ENCODE measurements at regions of chr5 and their contacts with region 1.

Region 1: GRCh38 chr5:132064738-132065331 is 4.4 kb downstream of the IL3 start:
- DNase-seq: peak; percentile 70
- ATAC-seq: peak; percentile 93
- H3K4me3 ChIP-seq: no peak overlapping the region
- H3K27ac ChIP-seq: no peak overlapping the region
- H3K4me1 ChIP-seq: 0 out of 2 replicates have a peak, but pooled peaks cover 2% of the 10 kb centered on the region
- H3K27me3 ChIP-seq: no peaks in the 10 kb centered on the region
- CTCF ChIP-seq: peak; percentile 86
- POLR2A ChIP-seq: no peak
- RAD21 ChIP-seq: peak; percentile 80

Region 2: DNA sequence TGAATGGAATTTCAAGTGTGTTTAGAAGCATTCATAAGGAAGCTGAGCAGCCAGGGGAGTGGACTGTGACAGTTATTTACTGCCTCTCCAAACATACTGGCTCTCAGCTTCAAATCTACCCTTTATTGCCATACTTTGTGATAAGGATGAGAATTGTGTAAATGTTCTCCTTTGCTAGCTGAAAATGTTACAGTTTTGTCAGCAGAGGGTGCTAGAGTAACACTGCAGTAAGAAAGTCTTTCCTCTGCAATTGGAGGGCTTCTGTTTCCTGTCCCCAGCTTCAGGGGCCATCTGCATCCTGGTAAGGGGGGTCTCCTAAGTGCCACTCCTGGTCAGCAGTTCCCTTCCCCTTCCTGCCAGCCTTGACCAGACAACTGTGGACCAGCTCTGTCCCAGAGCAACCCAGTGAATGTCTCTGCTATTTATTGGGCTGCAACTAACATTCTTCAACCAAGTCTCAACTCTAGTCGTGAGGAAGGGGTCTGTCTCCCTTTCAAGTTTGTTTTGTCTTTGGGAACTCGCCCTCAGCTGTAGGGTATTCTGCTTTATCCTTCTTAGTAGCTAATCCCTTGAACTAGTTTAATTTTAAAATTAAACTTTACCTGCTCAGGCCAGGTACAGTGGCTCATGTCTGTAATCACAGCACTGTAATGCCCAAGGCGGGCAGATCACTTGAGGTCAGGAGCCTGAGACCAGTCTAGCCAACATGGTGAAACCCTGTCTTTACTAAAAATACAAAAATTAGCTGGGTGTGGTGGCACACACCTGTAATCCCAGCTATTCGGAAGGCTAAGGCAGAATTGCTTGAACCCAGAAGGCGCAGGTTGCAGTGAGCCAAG is 475.1 kb before region 1 on chr5:
- CTCF ChIA-PET with region 1: interaction called, 6 read pairs
- POLR2A ChIA-PET with region 1: no interaction called
- dilution Hi-C with region 1: no loop called
- in situ Hi-C with region 1: no loop called
- intact Hi-C with region 1: loop called (anchors 2 kb)
- DNase-seq: peak; percentile 74
- ATAC-seq: peak; percentile 87
- H3K4me3 ChIP-seq: no peak overlapping the region
- H3K27ac ChIP-seq: no peak overlapping the region
- H3K4me1 ChIP-seq: peaks cover 6% of the 10 kb centered on the region
- H3K27me3 ChIP-seq: no peaks in the 10 kb centered on the region
- CTCF ChIP-seq: peak; percentile 90
- POLR2A ChIP-seq: peak; percentile 41; the same call in 1 of the 2 replicates
- RAD21 ChIP-seq: peak; percentile 93

Region 3: DNA sequence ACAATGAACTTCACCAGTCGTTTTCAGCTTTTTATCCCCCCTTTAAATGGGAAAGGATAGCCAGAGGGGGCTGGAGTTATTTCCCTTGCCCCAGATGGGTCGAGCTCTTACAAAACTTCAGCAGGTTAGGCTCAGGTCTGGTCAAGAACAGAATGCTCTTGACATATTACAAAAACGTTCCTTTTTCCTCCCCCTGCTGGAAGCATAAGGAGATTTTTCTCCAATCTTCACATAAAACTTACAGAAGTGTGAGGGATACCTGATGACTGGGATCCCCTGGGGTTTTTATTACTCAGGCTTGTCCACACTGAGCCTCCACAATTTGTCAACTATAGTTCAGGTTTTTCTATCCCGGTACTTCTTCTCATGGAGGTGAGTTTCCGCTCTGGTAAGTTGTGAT is 69.5 kb after region 1 on chr5:
- CTCF ChIA-PET with region 1: no interaction called
- POLR2A ChIA-PET with region 1: no interaction called
- dilution Hi-C with region 1: no loop called
- in situ Hi-C with region 1: no loop called
- intact Hi-C with region 1: loop called (anchors 1 kb)
- DNase-seq: peak; percentile 30
- ATAC-seq: no peak
- H3K4me3 ChIP-seq: no peak overlapping the region
- H3K27ac ChIP-seq: no peak overlapping the region
- H3K4me1 ChIP-seq: no peaks in the 10 kb centered on the region
- H3K27me3 ChIP-seq: no peaks in the 10 kb centered on the region
- CTCF ChIP-seq: peak; percentile 28; the same call in 1 of the 2 replicates
- POLR2A ChIP-seq: no peak
- RAD21 ChIP-seq: peak; percentile 33

Region 4: GRCh38 chr5:132363431-132364112 is 298.7 kb after region 1 on chr5:
- CTCF ChIA-PET with region 1: no interaction called
- POLR2A ChIA-PET with region 1: no interaction called
- dilution Hi-C with region 1: no loop called
- in situ Hi-C with region 1: loop called (anchors 10 kb)
- intact Hi-C with region 1: loop called (anchors 5 kb)
- DNase-seq: peak; percentile 93
- ATAC-seq: peak; percentile 55
- H3K4me3 ChIP-seq: no peak overlapping the region
- H3K27ac ChIP-seq: no peak overlapping the region
- H3K4me1 ChIP-seq: peaks cover 4% of the 10 kb centered on the region; the same call in 1 of the 2 replicates
- H3K27me3 ChIP-seq: peaks cover 2% of the 10 kb centered on the region; the same call in 1 of the 2 replicates
- CTCF ChIP-seq: no peak
- POLR2A ChIP-seq: no peak
- RAD21 ChIP-seq: no peak

Region 5: DNA sequence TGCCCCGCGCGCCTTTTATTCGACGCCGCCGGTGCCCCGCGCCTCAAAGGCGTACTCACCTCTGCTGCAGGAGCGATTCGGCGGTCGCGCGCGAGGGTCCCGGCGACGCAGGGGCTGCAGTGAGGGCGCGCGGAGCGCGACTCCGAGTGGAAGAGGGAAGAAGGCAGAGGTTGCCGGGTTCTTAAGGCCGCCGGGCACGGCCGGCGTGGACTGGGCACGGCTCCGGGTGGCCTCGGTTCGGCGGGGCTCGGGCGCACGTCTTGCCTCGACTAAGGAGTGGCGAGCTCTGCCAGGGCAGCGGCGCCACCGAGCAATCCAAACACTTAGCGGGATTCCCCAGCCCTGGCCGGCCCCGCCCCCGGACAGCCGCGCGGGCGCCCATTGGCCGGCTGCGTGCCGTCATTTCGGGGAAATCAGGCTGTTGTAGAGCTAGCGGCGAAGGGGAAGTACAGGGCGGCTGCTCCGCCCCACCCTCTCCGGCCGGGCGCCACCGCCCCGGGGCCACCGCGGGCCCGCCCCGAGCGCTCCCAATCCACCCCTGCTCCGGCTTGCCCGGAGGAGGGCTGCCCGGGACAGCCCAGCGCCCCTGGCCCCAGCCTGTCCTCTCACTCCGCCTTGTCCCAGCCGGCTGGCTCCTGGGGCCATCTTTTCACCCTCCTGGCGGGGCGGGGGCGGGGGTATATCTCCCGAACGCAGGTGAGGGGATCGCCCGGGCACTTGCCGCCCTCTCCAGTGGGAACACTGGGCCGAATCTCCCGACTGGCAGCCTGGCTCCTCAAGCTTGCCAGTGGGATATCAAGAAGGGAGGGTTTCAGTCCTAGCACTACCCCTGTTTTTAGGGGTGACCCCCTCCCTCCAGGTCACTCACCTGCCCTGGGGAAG is 425.9 kb after region 1 on chr5 and contains the start of gene IRF1:
- CTCF ChIA-PET with region 1: no interaction called
- POLR2A ChIA-PET with region 1: no interaction called
- dilution Hi-C with region 1: no loop called
- in situ Hi-C with region 1: no loop called
- intact Hi-C with region 1: loop called (anchors 10 kb)
- DNase-seq: peak; percentile 94
- ATAC-seq: peak; percentile 89
- H3K4me3 ChIP-seq: peak within 1 kb of the TSS; percentile 91
- H3K27ac ChIP-seq: peak within 1 kb of the TSS; percentile 85
- H3K4me1 ChIP-seq: peaks cover 28% of the 10 kb centered on the region
- H3K27me3 ChIP-seq: no peaks in the 10 kb centered on the region
- CTCF ChIP-seq: no peak
- POLR2A ChIP-seq: peak; percentile 99
- RAD21 ChIP-seq: no peak
- total RNA-seq, gene IRF1: 6.9 and 11.1 TPM in 2 replicates

Measured in IMR-90 (cell line).